ENCODE measurements at regions of chr19 and their contacts with region 1.

Region 1: DNA sequence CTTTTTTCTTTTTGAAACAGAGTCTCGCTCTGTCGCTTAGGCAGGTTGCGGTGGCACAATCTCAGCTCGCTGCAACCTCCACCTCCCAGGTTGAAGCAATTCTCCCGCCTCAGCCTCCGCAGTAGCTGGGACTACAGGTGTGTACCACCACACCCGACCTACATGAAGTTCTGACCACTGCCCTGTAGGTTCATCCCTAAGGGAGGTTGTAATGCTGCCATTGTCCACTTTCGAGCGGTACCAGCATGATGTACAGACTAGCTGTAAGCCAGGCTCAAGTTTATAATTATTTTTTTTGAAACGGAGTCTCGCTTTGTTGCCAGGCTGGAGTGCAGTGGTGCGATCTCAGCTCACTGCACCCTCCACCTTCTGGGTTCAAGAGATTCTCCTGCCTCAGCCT is 11.6 kb upstream of the COX7A1 start:
- DNase-seq: no peak
- ATAC-seq: no peak
- H3K4me3 ChIP-seq: no peak overlapping the region
- H3K4me3 Mint-ChIP-seq: no peak overlapping the region
- H3K27ac ChIP-seq: no peak overlapping the region
- H3K27ac Mint-ChIP-seq: no peak overlapping the region
- H3K4me1 ChIP-seq: no peaks in the 10 kb centered on the region
- H3K4me1 Mint-ChIP-seq: no peaks in the 10 kb centered on the region
- H3K27me3 ChIP-seq: no peaks in the 10 kb centered on the region
- H3K27me3 Mint-ChIP-seq: no peaks in the 10 kb centered on the region
- CTCF ChIP-seq: no peak

Region 2: DNA sequence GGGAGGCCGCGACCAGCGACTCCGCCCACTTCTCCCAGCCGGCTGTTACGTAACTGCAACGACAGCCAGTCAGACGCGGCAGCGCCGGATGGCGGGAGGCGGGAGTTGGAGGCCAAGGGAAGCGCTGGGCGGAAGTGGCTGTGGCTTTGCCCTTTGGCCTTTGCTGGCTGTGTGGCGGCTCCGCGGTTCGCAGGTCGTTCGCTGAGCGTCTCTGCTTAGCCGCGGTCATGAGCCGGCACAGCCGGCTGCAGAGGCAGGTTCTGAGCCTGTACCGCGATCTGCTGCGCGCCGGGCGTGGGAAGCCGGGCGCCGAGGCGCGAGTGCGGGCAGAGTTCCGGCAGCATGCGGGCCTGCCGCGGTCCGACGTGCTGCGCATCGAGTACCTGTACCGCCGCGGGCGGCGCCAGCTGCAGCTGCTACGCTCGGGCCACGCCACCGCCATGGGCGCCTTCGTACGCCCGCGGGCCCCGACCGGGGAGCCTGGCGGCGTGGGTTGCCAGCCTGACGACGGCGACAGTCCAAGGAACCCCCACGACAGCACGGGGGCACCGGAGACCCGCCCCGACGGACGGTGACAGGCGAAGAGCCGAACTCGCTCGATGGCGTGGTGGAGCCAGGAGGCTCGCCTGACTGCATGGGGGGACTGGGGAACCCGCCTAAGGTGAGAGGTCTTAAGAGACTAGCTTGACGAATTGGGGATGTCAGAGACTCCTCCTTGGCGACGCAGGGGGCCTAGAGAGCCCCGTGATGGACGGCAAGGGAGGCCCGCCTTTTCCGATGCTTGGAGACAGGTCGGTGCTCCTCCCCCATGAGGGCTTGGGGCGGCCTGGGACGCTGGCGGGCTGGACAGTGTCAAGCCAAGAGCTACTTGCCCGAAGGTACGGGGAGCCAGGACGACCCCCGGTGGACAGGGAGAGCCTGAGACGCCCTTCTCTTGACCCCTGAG is 168.5 kb before region 1 on chr19 and contains the start of gene SDHAF1:
- CTCF ChIA-PET with region 1: no interaction called
- POLR2A ChIA-PET with region 1: no interaction called
- intact Hi-C with region 1: no loop called
- DNase-seq: peak; percentile 80 to 96 (median 92)
- ATAC-seq: peak; percentile 88
- H3K4me3 ChIP-seq: peak within 1 kb of the TSS; percentile 73 to 95
- H3K4me3 Mint-ChIP-seq: peak within 1 kb of the TSS; percentile 93
- H3K27ac ChIP-seq: peak within 1 kb of the TSS; percentile 55 to 69
- H3K27ac Mint-ChIP-seq: peak within 1 kb of the TSS; percentile 94
- H3K4me1 ChIP-seq: peaks cover 22% of the 10 kb centered on the region
- H3K4me1 Mint-ChIP-seq: peaks cover 35% of the 10 kb centered on the region
- H3K27me3 ChIP-seq: peaks cover 0 to 4% of the 10 kb centered on the region in 2 experiments
- H3K27me3 Mint-ChIP-seq: no peaks in the 10 kb centered on the region
- CTCF ChIP-seq: no peak
- total RNA-seq, gene SDHAF1: 7.3 TPM

Region 3: GRCh38 chr19:36132489-36132891 is 31.3 kb before region 1 on chr19:
- CTCF ChIA-PET with region 1: interaction called, 167 read pairs
- POLR2A ChIA-PET with region 1: interaction called, 7 read pairs
- intact Hi-C with region 1: no loop called
- DNase-seq: peak in 4 of 9 experiments; percentile 19 to 60 (median 37)
- ATAC-seq: no peak
- H3K4me3 ChIP-seq: no peak overlapping the region
- H3K4me3 Mint-ChIP-seq: no peak overlapping the region
- H3K27ac ChIP-seq: peak overlapping the region in 1 of 2 experiments; percentile 54
- H3K27ac Mint-ChIP-seq: no peak overlapping the region
- H3K4me1 ChIP-seq: peaks cover 5% of the 10 kb centered on the region
- H3K4me1 Mint-ChIP-seq: peaks cover 15% of the 10 kb centered on the region
- H3K27me3 ChIP-seq: no peaks in the 10 kb centered on the region
- H3K27me3 Mint-ChIP-seq: no peaks in the 10 kb centered on the region
- CTCF ChIP-seq: no peak

Measured in CD8-positive, alpha-beta T cell (primary cell).